Psoas muscle (tissue), 8 donors: ENCODE measurements at regions of chr9 and their contacts with region 1.

Region 1: GRCh38 chr9:83432104-83432639 is 106.0 kb downstream of the FRMD3 start:
- DNase-seq: peak; percentile 66 to 79
- ATAC-seq: peak; percentile 55 to 87 (median 76)
- H3K4me3 ChIP-seq: no peak overlapping the region
- H3K27ac ChIP-seq: peak overlapping the region; percentile 20
- H3K4me1 ChIP-seq: peaks cover 19% of the 10 kb centered on the region
- H3K27me3 ChIP-seq: no peaks in the 10 kb centered on the region
- CTCF ChIP-seq: no peak

Region 2: DNA sequence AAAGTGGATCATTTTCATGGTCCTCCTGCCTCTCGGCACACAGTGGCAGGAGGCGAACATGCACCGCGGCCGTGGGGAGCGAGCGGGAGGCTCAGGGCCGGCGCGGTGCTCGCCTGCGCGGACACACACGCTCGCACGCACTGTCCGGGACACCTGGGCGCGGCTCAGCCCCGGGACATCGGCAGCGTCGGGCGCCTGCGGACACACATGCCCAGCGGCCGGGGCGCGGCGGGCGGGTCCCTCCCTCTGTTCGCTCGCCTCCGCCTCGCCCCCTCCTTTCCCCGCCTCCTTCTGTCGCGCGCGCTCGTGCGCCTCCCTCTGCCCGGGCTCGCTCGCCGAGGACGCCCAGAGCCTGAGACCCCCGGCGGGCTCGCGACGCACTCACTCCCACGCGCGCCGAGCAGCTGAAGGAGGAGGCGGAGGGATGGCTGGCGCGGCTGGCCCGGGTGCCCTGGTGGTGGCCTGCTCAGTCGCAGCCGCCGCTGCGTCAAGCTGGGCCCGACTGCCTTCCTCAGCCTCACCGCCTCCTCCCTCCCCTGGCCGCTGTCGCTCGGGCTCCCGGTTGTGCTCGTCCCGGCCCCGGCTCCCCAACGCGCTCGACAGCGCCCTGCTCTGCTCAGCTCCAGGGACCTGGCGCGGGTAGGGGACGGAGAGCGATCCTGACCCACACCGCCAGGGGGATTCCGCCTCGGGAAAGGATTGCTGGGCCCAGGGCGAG is 106.2 kb after region 1 on chr9 and contains the start of gene FRMD3:
- intact Hi-C with region 1: loop called in 1 of 2 experiments (anchors 5 kb)
- DNase-seq: peak; percentile 78 to 91
- ATAC-seq: peak; percentile 88 to 96 (median 92)
- H3K4me3 ChIP-seq: peak within 1 kb of the TSS; percentile 85
- H3K27ac ChIP-seq: peak within 1 kb of the TSS; percentile 64
- H3K4me1 ChIP-seq: peaks cover 16% of the 10 kb centered on the region
- H3K27me3 ChIP-seq: peaks cover 0 to 10% (median 0%) of the 10 kb centered on the region in 3 donors
- CTCF ChIP-seq: peak; percentile 64
- total RNA-seq, gene FRMD3: 27.5 to 41.0 (median 37.8) TPM